K562 (cell line): ENCODE measurements at regions of chr7 and their contacts with region 1.

Region 1: DNA sequence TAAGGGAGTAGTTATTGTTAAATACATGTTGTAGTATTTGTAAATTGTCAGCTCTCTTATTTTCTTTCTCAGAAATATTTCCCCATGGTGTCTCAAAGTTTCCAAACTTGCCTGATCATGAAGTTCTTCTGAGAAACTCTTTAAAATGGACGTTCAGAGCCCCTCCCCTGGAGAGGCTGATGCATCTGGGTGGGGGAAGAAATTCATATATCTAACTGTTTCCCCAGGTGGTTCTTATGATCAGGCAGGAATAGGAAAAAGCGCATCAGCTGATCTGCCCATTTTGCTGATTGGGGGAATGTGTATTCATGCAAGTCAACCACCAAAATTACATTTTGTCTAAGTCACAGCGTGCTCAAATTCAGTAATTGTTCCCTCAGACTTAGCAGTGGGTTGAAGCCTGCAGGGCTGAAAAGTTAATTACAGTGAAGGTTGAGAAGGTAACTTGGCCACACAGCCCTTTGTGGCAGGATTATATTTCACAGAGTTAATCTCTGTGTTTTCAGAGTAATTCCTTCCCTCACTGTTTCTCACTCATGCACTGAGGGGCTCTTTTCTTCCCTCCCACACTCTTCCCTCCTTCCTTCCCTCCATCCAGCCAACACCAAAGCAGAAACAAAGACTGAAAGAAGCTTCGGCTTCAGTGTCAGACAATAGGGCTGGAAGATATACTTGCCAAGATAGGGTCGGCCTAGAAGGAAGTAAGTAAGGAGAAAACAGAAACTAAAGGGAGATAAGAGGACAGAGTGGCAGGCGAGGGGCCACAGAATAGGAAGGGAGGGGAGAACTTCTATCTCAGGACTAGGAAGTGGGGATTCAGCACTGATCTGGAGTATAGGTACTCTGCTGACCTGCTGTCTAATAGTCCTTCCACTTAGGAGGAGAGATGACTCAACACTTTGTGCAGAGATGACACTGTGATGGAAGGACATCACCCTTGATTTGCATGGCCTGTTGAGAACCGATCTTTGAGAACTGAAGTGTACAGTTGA is 50.5 kb upstream of the STARD3NL start:
- DNase-seq: peak; percentile 20 to 76 (median 44)
- ATAC-seq: peak; percentile 97
- H3K4me3 ChIP-seq: 0 out of 2 replicates have a peak overlapping the region, but pooled peaks have one; percentile 9
- H3K27ac ChIP-seq: peak overlapping the region; percentile 92
- H3K4me1 ChIP-seq: peaks cover 3 to 20% of the 10 kb centered on the region in 2 experiments; a peak in 4 of 5 replicates
- H3K27me3 ChIP-seq: no peaks in the 10 kb centered on the region
- CTCF ChIP-seq: no peak
- EP300 ChIP-seq: no peak
- POLR2A ChIP-seq: 0 out of 2 replicates have a peak, but pooled peaks have one; percentile 33
- RAD21 ChIP-seq: 0 out of 4 replicates have a peak, but pooled peaks of 1 of the 2 experiments have one; percentile 11

Region 2: DNA sequence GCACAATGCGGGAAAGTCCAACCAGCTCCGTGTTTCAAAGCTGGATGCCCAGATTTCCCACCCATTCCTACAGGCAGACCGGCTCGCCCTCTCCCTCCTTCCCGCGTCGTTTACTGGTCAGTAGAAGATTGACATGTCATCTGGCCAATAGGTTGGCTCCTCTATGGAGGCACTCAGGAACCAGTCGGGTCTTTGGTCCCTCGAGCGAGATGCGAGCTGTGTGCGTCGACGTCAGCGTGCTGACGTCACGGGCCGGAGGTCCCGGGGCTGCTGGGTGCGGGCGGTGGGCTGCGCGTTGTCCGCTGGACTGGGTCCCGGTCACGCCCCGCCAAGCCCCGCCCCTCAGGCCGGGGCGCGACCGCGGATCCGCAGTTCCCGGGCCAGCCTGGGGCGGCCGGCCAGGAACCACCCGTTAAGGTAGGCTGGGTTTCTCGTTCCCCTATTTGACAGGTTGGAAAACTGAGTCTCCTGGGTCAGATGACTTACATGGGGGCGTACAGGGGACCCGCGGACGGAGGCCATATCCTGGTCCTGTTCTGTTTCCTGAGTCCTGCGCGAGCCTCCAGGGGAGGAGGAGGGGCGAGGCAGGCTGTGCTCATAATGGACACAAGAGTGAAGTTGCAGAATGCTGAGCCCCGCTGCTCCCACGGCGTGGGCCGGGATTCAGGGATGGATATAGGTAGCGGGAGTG is 50.6 kb after region 1 on chr7 and contains the start of gene STARD3NL:
- CTCF ChIA-PET with region 1: no interaction called
- POLR2A ChIA-PET with region 1: no interaction called
- in situ Hi-C with region 1: no loop called
- intact Hi-C with region 1: loop called (anchors 5 kb)
- DNase-seq: peak; percentile 96 to 100 (median 97)
- ATAC-seq: peak; percentile 94
- H3K4me3 ChIP-seq: peak within 1 kb of the TSS; percentile 68
- H3K27ac ChIP-seq: peak within 1 kb of the TSS; percentile 76
- H3K4me1 ChIP-seq: peaks cover 7 to 26% of the 10 kb centered on the region in 2 experiments
- H3K27me3 ChIP-seq: no peaks in the 10 kb centered on the region
- CTCF ChIP-seq: 0 out of 6 replicates have a peak, but pooled peaks of 1 of the 3 experiments have one; percentile 22
- EP300 ChIP-seq: no peak
- POLR2A ChIP-seq: peak; percentile 83
- RAD21 ChIP-seq: no peak
- polyA plus RNA-seq, gene STARD3NL: 79.6 to 90.0 TPM